Activated CD4-positive, alpha-beta memory T cell treated with anti-CD3 and anti-CD28 coated beads for 36 hours (primary cell): ENCODE measurements at regions of chr17 and their contacts with region 1.

Region 1: GRCh38 chr17:30236766-30237165 is 1.3 kb upstream of the SLC6A4 start:
- DNase-seq: peak; percentile 49
- H3K4me3 Mint-ChIP-seq: peak overlapping the region; percentile 27
- H3K27ac Mint-ChIP-seq: no peak overlapping the region
- H3K4me1 Mint-ChIP-seq: peaks cover 16% of the 10 kb centered on the region
- H3K27me3 Mint-ChIP-seq: peaks cover 60% of the 10 kb centered on the region

Region 2: GRCh38 chr17:30124273-30124796 is 112.4 kb before region 1 on chr17:
- CTCF ChIA-PET with region 1: interaction called, 17 read pairs
- POLR2A ChIA-PET with region 1: no interaction called
- intact Hi-C with region 1: loop called (anchors 5 kb)
- DNase-seq: no peak
- H3K4me3 Mint-ChIP-seq: no peak overlapping the region
- H3K27ac Mint-ChIP-seq: no peak overlapping the region
- H3K4me1 Mint-ChIP-seq: peaks cover 34% of the 10 kb centered on the region
- H3K27me3 Mint-ChIP-seq: no peaks in the 10 kb centered on the region

Region 3: DNA sequence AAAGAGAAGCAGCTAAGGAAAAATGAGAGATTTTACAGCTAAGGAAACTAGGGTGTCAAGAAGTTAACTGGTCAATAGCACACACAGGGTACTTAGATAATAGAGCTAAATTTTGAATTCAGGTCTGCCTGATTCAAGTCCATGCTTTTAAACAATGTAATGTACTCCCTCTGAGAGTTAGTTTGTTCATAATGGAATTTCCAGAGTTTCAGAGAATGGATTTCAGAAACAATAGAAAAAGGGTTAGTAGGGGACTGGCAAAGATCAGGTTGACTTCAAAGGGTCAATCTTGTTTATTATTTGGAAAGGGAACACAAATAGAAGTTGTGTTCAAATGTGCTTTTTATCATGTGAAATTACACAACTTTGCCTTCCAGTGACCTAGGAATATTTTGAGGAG is 102.2 kb before region 1 on chr17:
- CTCF ChIA-PET with region 1: no interaction called
- POLR2A ChIA-PET with region 1: no interaction called
- intact Hi-C with region 1: loop called (anchors 5 kb)
- DNase-seq: no peak
- H3K4me3 Mint-ChIP-seq: no peak overlapping the region
- H3K27ac Mint-ChIP-seq: no peak overlapping the region
- H3K4me1 Mint-ChIP-seq: peaks cover 14% of the 10 kb centered on the region
- H3K27me3 Mint-ChIP-seq: no peaks in the 10 kb centered on the region

Region 4: GRCh38 chr17:30252940-30253717 is 16.4 kb after region 1 on chr17:
- CTCF ChIA-PET with region 1: no interaction called
- POLR2A ChIA-PET with region 1: no interaction called
- intact Hi-C with region 1: no loop called
- DNase-seq: no peak
- H3K4me3 Mint-ChIP-seq: no peak overlapping the region
- H3K27ac Mint-ChIP-seq: no peak overlapping the region
- H3K4me1 Mint-ChIP-seq: no peaks in the 10 kb centered on the region
- H3K27me3 Mint-ChIP-seq: no peaks in the 10 kb centered on the region